GM18951 (cell line): ENCODE measurements at regions of chr9 and their contacts with region 1.

Region 1: GRCh38 chr9:123544007-123544827 is 188.2 kb downstream of the CRB2 start:
- POLR2A ChIP-seq: no peak

Region 2: DNA sequence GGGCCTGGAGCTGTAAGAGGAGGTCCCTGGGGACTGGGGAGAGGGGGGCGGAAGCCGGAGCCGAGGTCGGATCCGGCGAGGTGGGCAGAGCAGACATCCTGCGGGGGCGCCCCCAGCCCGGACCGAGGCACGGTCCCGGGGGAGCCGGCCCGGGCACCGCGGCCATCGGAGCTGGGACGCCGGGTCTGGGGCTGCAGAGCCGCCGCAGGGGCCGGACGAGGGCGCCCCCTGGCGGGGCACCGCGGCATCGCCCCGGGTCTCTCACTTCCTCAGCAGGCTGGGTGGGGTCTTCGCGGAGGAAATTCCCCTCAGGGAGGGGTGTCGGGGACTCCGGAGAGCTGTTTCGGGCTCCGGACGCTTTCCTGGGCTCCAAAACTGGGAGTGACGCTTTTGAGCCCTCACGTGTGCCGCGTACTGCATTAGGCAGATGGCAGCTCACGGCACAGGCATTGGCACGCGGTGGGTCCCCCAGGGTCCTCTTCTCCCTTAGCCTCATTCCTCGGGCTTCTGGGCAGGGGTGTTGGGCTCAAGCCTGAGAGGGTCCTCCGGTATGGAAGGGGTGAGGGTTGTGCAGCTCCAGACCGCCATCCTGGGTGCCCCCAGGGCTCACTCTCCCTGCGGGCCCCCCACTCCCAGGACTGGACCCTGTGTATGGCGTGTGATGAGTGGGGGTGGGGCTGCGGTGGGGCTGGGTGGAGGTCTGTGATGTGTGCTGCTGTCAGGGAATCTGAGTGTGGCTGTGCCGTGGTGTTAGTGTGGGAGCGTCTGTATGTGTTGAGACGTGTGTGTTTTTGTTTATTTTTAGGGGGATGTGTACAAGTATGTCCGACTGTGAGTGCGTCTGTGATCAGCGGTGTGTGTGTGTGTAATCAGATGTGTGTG is 497.0 kb after region 1 on chr9:
- in situ Hi-C with region 1: loop called (anchors 25 kb)
- POLR2A ChIP-seq: no peak